ENCODE measurements at regions of chr10 and their contacts with region 1.

Region 1: DNA sequence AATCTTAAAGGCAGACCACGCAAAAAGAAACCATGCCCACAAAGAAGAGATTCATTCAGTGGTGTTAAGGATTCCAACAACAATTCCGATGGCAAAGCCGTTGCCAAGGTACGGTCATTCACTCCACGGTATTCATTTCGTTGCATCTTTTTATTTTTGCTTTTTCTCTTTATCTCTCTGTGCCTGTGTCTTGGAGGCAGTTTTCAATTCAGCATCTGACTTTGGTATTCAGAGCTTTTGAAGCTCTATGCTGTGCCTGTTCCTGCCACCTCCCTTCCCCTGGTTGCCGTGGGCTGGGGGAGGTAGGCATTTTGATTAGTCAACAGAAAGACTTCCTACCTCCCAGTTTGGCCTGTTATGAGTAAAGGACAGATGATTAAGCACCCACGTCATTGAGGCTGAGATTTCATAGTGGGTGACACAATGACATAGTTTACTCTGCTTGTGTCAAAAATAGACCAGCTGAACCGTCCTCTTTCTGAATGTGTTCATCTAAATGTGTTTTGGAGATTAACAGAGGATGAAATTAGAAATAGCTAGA is 149.5 kb downstream of the ARID5B start:
- DNase-seq: peak; percentile 72
- H3K4me3 Mint-ChIP-seq: peak overlapping the region; percentile 97
- H3K27ac Mint-ChIP-seq: peak overlapping the region; percentile 99
- H3K4me1 Mint-ChIP-seq: peaks cover 86% of the 10 kb centered on the region
- H3K27me3 Mint-ChIP-seq: no peaks in the 10 kb centered on the region

Region 2: DNA sequence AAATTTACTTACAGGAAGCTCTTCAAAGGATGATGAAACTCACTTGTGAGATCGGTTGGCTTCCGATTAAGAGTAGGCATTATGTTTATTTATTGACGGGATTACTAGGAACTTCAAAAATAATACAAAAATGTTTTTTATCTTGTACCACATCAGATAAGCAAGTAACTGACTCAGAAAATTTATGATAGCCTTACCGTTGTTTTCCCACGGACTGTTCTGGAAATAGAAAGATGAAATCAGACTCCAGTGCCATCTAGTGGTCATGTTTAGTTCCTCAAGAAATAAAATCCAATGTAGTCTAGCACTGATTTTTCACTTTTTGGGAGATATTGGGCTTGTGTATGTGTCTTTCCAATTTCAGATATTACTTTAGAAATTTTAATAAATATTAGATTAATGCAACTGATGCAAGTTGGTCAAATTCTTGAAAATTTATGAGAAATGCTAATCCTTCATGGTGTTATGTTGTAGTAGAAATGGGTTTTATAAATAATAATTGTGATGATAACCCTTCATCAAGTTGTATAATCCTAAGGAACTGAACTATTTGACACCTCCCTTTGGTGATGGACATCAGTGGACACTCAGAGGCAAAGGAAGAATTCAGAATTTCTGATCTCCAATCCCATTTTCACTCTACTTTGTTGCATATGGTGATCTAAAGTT is 766.6 kb before region 1 on chr10:
- intact Hi-C with region 1: loop called (anchors 10 kb)
- DNase-seq: no peak
- H3K4me3 Mint-ChIP-seq: no peak overlapping the region
- H3K27ac Mint-ChIP-seq: no peak overlapping the region
- H3K4me1 Mint-ChIP-seq: peaks cover 44% of the 10 kb centered on the region
- H3K27me3 Mint-ChIP-seq: peaks cover 12% of the 10 kb centered on the region

Region 3: DNA sequence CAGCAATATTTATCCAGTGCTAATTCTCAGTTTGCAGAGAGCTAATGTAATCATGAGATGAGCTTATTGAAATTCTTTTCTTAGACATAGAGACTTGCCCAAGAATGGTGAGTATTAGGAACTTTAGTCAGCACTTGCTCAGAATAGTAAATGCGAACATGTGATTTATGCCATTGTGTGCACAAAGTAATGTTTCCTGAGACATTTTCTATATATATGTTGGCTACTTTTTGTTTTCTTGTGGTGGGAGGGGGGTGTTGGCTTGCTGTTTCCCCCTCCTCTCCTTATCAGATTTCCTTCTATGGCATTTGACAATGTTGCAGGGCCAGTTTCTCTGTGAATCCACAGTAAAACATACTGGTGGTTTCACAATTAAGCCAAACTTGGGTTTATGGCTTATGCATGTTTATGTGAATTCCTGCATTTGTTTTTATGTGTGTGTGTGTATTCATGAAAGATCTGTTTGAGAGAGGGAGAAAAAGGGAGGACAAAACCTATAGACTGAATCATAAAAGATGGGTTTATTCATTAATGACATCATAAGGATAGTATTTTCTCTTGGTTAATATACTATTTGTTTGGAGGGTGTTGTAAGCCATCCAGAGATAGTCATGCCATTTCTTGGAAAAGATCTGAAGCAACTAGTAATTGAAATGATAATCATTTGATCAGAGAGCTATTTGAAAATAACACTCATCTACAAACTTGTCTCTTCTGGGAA is 113.2 kb before region 1 on chr10:
- intact Hi-C with region 1: loop called (anchors 1 kb)
- DNase-seq: no peak
- H3K4me3 Mint-ChIP-seq: peak overlapping the region; percentile 51
- H3K27ac Mint-ChIP-seq: peak overlapping the region; percentile 91
- H3K4me1 Mint-ChIP-seq: peaks cover 73% of the 10 kb centered on the region
- H3K27me3 Mint-ChIP-seq: no peaks in the 10 kb centered on the region

Region 4: DNA sequence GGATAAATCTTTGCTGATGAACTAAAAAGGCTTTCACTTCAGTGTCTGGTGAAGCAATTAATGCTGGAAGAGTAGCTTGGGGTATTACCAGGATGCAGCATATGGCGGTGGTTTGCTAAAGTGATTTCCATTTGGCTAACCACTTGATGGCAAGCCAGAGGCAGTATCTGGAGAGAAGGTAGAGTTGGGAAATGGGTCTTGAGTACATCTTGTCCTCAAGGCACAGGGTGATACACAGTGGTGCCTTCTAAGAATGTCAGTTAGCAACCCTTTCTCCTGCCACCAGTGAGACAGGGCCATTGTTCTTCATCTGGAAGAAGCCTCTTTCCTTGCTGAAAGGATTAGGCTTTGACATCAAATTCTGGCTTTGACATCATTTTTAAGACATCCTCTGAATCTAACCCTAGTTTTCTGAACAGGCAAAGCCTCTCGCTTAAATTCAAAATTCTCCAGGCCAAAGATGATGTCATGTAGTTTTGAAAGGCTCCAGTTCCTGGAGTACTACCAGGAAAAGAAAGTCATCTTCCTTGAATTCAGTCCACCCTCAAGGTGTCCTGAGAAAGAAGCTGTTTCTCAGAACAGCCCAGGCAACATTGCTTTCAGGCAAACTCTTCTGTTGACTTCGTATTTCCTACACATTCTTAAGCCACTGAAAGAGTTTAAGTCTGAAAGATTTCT is 13.0 kb after region 1 on chr10:
- intact Hi-C with region 1: loop called (anchors 1 kb)
- DNase-seq: no peak
- H3K4me3 Mint-ChIP-seq: peak overlapping the region; percentile 39
- H3K27ac Mint-ChIP-seq: peak overlapping the region; percentile 87
- H3K4me1 Mint-ChIP-seq: peaks cover 72% of the 10 kb centered on the region
- H3K27me3 Mint-ChIP-seq: no peaks in the 10 kb centered on the region

Region 5: GRCh38 chr10:62224606-62225005 is 173.6 kb after region 1 on chr10:
- intact Hi-C with region 1: loop called (anchors 5 kb)
- DNase-seq: no peak
- H3K4me3 Mint-ChIP-seq: no peak overlapping the region
- H3K27ac Mint-ChIP-seq: no peak overlapping the region
- H3K4me1 Mint-ChIP-seq: peaks cover 9% of the 10 kb centered on the region
- H3K27me3 Mint-ChIP-seq: no peaks in the 10 kb centered on the region

Region 6: DNA sequence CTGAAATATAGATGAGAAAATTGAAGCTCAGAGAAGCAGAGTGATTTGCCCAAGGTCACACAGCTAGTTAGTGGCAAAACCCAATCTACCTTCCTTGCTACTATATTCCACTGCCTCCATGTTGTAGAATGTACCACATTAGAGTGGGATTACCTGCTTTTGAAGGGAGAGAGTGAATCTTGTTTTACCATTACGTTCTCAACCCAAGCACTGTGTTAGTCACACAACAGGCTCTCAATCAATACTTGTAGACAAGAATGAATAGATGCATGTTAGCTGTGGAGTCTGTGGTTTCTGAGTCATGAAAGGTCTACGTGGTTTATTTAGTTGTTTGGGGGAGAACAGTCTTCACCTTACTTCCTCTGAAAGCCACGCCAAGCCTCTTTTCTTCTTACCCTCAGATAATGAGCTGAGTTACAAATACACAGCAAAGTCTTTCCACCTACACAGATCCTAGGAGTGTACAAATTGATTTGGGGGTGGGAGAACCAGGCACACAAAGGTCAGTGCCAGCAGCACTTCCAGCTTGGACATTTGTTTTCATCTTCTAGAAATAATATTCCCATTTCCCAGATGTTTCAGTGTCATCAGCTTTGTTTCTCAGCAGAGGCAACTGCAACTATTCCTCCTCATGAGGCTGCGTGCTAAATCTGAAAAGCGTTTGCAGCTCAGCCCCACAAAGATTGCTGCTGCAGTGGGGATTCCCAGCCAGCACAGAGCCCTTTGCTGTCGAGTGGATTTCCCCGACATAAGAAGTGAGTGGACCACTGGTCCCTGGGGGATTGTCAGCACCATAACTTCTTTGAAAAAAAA is 682.1 kb after region 1 on chr10:
- intact Hi-C with region 1: loop called (anchors 10 kb)
- DNase-seq: peak; percentile 51
- H3K4me3 Mint-ChIP-seq: peak overlapping the region; percentile 56
- H3K27ac Mint-ChIP-seq: no peak overlapping the region
- H3K4me1 Mint-ChIP-seq: peaks cover 23% of the 10 kb centered on the region
- H3K27me3 Mint-ChIP-seq: no peaks in the 10 kb centered on the region

Region 7: DNA sequence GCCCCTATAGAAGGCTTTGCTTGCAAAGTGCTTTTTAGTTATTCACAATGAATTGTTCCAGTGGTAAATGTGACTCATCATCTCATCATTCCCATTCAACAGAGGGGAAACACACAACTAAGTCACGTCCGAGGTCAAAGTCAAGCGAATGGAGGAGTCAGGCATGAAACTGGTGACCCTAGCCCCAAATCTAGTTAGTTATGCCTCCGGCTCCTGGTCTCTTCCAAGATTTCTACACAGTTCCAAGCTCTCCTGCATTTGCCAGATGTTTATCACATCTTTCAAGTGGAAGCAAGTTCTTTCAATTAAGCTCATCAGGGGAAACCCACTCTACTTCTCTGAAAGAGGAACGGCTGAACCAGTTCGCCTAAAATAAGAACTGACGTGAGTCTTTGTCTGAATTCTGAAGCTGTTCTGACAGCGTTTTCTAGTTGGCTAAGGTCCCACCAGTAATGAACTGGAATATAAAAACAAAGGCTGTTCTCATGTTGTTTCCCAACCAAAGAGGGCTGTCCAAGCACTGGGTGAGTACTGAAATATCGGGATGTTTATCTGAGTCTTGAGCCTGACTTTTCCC is 941.3 kb after region 1 on chr10:
- intact Hi-C with region 1: loop called (anchors 10 kb)
- DNase-seq: no peak
- H3K4me3 Mint-ChIP-seq: peak overlapping the region; percentile 50
- H3K27ac Mint-ChIP-seq: peak overlapping the region; percentile 89
- H3K4me1 Mint-ChIP-seq: peaks cover 66% of the 10 kb centered on the region
- H3K27me3 Mint-ChIP-seq: no peaks in the 10 kb centered on the region

Measured in activated T-helper 2 cell treated with anti-CD3 and anti-CD28 coated beads, Interferon-gamma antibody, Interleukin-2, Interleukin-4, amounts not matched to agents 10 μg/mL and 5 μg/mL and 100 μg/mL, durations not matched to agents 14 hours and 24 hours and 36 hours (primary cell).